H1 (cell line): ENCODE measurements at regions of chr1 and their contacts with region 1.

Region 1: DNA sequence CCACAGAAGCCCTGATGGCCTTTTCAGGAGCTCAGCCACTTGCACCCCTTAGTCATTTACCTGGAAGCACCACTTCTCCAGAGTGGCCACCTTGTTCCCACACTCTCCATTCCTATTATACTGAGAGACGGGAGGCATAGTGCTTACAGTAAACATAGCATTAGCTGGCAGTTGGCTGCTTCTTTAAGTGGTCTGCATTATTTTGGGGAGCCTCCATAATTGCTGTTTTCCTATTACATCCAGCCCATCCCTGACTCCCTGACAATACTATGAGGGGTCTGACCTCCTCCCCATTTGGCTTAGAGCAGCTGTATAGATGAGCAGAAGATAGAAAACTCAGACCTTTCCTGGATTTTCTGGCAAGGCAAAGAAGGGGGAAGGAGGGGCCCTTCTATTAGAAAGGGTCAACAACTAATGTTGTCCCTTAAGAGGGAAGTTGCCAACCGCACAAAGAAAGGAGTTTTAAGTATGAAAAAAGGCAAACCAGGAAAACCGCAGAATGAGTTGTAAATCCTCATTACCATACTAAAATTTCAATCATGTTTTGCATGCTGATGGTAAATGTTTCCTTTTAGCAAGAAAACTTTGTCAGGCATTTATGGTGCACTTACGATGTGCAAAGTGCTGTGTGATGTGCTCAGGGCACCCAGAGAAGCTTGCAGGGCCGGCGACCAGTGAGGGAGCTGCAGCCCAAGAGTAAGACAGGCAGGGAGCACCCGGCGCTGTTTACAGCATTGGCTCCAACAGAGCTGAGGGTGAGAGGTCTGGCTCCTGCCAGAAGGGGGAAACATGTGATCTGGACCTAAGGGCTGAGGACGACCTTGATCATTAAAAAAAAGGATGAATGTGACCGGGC is 167.3 kb downstream of the ZZZ3 start:
- DNase-seq: peak; percentile 56 to 57
- H3K4me3 ChIP-seq: peak overlapping the region in 1 of 4 experiments; percentile 23; a peak in 2 of 8 replicates
- H3K27ac ChIP-seq: peak overlapping the region; percentile 68
- H3K4me1 ChIP-seq: peaks cover 4 to 18% (median 13%) of the 10 kb centered on the region in 4 experiments
- H3K27me3 ChIP-seq: no peaks in the 10 kb centered on the region
- CTCF ChIP-seq: peak; percentile 39 to 55 (median 50)
- EP300 ChIP-seq: no peak
- POLR2A ChIP-seq: no peak
- RAD21 ChIP-seq: peak; percentile 48 to 64

Region 2: DNA sequence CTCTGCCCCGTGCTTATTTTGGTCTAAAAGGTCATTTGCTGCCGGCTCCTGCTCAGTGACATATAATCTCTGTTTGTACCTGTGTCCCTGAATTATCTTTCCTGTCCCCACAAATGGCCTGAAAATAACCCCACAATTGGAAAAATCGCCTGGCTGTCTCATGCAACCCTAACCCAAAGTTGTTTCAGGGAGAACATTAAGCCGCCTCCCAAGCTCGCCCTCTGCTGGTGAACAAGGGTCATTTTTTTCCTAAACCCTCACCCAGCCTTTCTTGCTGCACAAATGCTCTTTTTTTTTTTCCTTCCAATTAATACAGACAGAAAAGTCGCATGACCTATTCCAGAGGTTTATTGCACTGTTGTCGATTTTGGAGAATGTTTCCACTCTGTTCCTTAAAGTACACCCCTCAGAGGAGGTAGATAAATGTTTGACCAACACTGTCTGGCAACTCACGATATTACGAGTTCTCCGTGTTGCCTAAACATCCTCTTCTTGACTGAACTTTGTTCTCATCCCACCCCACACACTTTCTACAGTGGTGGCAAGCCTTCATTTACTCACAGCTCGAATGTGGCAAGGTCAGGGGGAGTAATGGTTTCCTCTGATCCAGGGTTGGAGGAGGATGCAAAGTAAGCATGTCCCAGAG is 18.6 kb after region 1 on chr1:
- CTCF ChIA-PET with region 1: interaction called, 25 read pairs
- POLR2A ChIA-PET with region 1: interaction called, 8 read pairs
- DNase-seq: peak; percentile 43 to 66
- H3K4me3 ChIP-seq: no peak overlapping the region
- H3K27ac ChIP-seq: no peak overlapping the region
- H3K4me1 ChIP-seq: no peaks in the 10 kb centered on the region
- H3K27me3 ChIP-seq: no peaks in the 10 kb centered on the region
- CTCF ChIP-seq: peak; percentile 57 to 78 (median 73)
- EP300 ChIP-seq: no peak
- POLR2A ChIP-seq: no peak
- RAD21 ChIP-seq: peak; percentile 80 to 85